Activated CD8-positive, alpha-beta T cell treated with anti-CD3 and anti-CD28 coated beads, Interleukin-2, amount 10 ng/mL, durations not matched to agents 7 days and 5 days (primary cell): ENCODE measurements at regions of chr4 and their contacts with region 1.

Region 1: DNA sequence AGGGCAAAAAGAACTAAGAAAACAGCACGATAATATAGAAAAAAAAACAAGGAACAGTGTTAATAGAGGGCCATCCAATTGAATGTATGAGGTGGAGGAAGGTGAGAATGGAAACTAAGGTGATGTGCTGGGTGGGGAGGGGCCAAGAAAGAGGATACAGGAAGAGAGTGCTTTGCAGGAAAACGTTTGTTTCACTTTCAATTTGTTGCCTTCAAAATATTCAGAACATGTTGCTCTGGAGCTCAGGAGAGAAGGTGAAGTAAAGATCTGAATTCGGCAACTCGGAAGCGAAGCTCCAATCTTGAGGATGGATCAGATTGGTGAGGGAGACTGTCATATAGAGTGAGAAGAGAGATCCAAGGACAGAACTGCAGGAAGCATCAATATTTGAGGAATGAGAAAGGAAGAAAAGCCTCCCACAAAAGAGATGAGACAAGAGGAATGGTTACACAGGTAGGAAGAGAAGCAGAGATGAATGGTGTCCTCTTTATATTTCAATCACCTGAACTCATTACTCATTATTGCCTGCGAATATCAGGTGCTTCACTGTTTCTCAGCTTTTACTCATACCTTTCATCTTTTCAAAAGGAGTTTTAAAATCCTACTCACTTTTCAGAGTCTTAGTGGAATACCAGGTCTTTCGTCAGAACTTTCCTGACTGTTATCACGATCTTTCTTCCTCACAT is 14.7 kb upstream of the SEC24D start:
- DNase-seq: peak; percentile 68
- ATAC-seq: peak; percentile 97
- H3K4me3 Mint-ChIP-seq: peak overlapping the region; percentile 86
- H3K27ac Mint-ChIP-seq: peak overlapping the region; percentile 92
- H3K4me1 Mint-ChIP-seq: peaks cover 24% of the 10 kb centered on the region
- H3K27me3 Mint-ChIP-seq: peaks cover 7% of the 10 kb centered on the region

Region 2: GRCh38 chr4:118835571-118836300 is 14.9 kb before region 1 on chr4 and contains the start of gene SEC24D:
- CTCF ChIA-PET with region 1: interaction called, 43 read pairs
- POLR2A ChIA-PET with region 1: interaction called, 14 read pairs
- DNase-seq: peak; percentile 84
- ATAC-seq: peak; percentile 88
- H3K4me3 Mint-ChIP-seq: peak within 1 kb of the TSS; percentile 94
- H3K27ac Mint-ChIP-seq: peak within 1 kb of the TSS; percentile 95
- H3K4me1 Mint-ChIP-seq: peaks cover 24% of the 10 kb centered on the region
- H3K27me3 Mint-ChIP-seq: peaks cover 4% of the 10 kb centered on the region
- total RNA-seq, gene SEC24D: 29.5 to 32.7 TPM